ENCODE measurements at regions of chr2 and their contacts with region 1.

Region 1: DNA sequence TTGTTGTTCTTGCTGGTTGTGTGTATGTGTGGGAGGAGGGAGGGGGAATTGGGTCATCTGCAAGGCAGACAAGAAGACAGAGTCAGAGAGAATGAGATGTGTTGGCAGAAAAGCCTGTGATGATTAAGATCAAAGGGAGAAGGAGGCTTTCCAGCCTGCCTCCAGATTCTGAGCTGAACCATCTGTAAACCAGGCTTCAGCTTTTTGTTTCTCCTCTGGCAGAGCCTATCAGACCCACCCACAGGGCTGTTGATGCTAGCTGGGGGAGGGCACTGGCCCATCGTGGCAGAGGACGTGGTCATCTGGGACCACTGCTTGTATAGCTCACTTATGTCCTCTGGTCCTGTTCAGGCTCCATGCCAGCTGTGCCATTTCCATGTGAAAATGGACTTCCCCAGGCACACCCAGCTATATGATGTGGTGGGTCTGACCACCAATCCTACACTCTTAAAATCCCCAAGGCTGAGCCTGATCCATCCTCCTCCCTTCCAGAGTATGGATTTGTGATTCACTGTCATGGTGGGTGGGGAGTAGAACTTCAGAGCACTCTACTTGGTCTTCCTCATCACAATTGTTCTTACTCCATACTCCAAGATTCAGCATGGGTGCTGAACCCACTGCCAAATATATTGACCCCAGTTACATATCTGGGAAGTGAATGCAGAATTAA is 27.8 kb upstream of the COL6A3 start:
- DNase-seq: peak; percentile 72
- H3K4me3 Mint-ChIP-seq: peak overlapping the region; percentile 49
- H3K27ac Mint-ChIP-seq: peak overlapping the region; percentile 86
- H3K4me1 Mint-ChIP-seq: peaks cover 52% of the 10 kb centered on the region
- H3K27me3 Mint-ChIP-seq: no peaks in the 10 kb centered on the region

Region 2: GRCh38 chr2:237427769-237428506 is 13.8 kb before region 1 on chr2:
- intact Hi-C with region 1: loop called (anchors 1 kb)
- DNase-seq: peak; percentile 84
- H3K4me3 Mint-ChIP-seq: peak overlapping the region; percentile 73
- H3K27ac Mint-ChIP-seq: peak overlapping the region; percentile 95
- H3K4me1 Mint-ChIP-seq: peaks cover 76% of the 10 kb centered on the region
- H3K27me3 Mint-ChIP-seq: no peaks in the 10 kb centered on the region

Region 3: DNA sequence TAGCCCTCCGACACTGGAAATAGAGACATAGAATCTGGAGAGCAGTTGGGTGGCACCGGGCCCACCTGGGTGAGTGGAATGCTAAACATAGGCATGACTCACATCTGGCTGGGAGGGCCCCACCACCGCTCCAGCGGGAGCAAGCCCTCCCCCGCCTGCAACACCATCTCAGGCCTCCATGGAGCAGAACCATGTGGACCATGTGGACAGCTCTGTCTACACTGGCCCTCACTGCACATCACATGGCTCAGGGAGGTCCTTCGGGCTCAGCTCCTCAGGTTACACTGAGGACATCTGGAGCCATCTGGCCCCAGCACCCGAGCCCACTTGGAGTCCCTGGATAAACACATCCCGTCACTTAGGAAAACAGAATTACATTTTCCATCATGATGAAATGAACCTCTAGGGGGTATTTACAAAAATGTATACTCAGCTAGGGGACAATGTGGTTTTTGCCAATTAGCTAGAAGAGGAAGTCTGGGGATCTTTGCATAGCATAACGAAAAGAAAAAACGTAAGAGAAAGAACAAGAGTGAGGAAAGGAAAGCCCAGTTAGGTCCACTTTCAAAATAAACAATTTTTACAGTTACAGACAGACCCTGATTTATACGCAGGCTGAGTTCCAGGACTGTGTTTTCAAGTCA is 14.6 kb after region 1 on chr2:
- intact Hi-C with region 1: loop called (anchors 2 kb)
- DNase-seq: no peak
- H3K4me3 Mint-ChIP-seq: no peak overlapping the region
- H3K27ac Mint-ChIP-seq: no peak overlapping the region
- H3K4me1 Mint-ChIP-seq: peaks cover 29% of the 10 kb centered on the region
- H3K27me3 Mint-ChIP-seq: no peaks in the 10 kb centered on the region